Activated CD8-positive, alpha-beta T cell treated with anti-CD3 and anti-CD28 coated beads for 36 hours (primary cell): ENCODE measurements at regions of chr14 and their contacts with region 1.

Region 1: GRCh38 chr14:36520601-36521525 is 831 bp upstream of the NKX2-1 start:
- DNase-seq: no peak
- ATAC-seq: no peak
- H3K4me3 Mint-ChIP-seq: peak overlapping the region; percentile 17
- H3K27ac Mint-ChIP-seq: no peak overlapping the region
- H3K4me1 Mint-ChIP-seq: peaks cover 14% of the 10 kb centered on the region
- H3K27me3 Mint-ChIP-seq: peaks cover 63% of the 10 kb centered on the region
- CTCF ChIP-seq: no peak

Region 2: GRCh38 chr14:36478782-36479181 is 42.1 kb before region 1 on chr14:
- CTCF ChIA-PET with region 1: no interaction called
- POLR2A ChIA-PET with region 1: no interaction called
- intact Hi-C with region 1: no loop called
- DNase-seq: peak; percentile 20
- ATAC-seq: peak; percentile 74
- H3K4me3 Mint-ChIP-seq: no peak overlapping the region
- H3K27ac Mint-ChIP-seq: no peak overlapping the region
- H3K4me1 Mint-ChIP-seq: peaks cover 2% of the 10 kb centered on the region
- H3K27me3 Mint-ChIP-seq: peaks cover 12% of the 10 kb centered on the region
- CTCF ChIP-seq: no peak

Region 3: DNA sequence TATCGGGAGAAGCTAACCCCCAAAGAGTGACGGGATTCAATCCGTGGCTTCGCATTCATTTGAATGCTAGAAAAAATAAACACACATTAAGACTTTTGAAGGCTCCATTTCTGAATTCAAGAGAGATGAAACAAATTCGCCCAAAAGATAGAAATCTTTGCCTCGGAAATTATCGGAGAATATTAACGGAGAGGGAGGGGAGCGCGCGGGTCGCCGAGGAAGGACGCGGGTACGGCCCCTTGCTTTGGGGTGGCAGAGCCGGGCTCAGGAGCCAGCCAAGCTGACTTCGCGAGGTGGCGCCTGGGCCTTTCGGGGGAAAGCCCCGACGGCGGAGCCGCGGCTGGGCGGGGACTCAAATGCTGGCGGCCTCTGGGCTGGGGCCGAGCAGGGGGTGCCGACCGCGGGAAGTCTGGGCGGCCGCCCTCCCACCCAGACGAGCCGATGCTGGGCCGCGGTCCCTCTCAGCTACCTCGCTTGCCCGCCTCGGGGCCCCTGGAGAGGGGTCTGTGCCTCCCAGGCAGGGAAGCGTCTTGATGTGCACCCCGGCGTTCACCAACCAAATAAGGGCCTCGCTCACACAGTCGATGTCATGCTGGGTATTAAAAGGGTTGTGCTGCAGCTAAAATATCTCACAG is 15.6 kb before region 1 on chr14:
- CTCF ChIA-PET with region 1: interaction called, 15 read pairs
- POLR2A ChIA-PET with region 1: interaction called, 4 read pairs
- intact Hi-C with region 1: no loop called
- DNase-seq: no peak
- ATAC-seq: peak; percentile 42
- H3K4me3 Mint-ChIP-seq: no peak overlapping the region
- H3K27ac Mint-ChIP-seq: no peak overlapping the region
- H3K4me1 Mint-ChIP-seq: peaks cover 9% of the 10 kb centered on the region
- H3K27me3 Mint-ChIP-seq: peaks cover 72% of the 10 kb centered on the region
- CTCF ChIP-seq: no peak

Region 4: GRCh38 chr14:36580856-36581831 is 60.3 kb after region 1 on chr14:
- CTCF ChIA-PET with region 1: no interaction called
- POLR2A ChIA-PET with region 1: no interaction called
- intact Hi-C with region 1: loop called (anchors 5 kb)
- DNase-seq: peak; percentile 43
- ATAC-seq: no peak
- H3K4me3 Mint-ChIP-seq: no peak overlapping the region
- H3K27ac Mint-ChIP-seq: no peak overlapping the region
- H3K4me1 Mint-ChIP-seq: no peaks in the 10 kb centered on the region
- H3K27me3 Mint-ChIP-seq: peaks cover 59% of the 10 kb centered on the region
- CTCF ChIP-seq: no peak

Region 5: DNA sequence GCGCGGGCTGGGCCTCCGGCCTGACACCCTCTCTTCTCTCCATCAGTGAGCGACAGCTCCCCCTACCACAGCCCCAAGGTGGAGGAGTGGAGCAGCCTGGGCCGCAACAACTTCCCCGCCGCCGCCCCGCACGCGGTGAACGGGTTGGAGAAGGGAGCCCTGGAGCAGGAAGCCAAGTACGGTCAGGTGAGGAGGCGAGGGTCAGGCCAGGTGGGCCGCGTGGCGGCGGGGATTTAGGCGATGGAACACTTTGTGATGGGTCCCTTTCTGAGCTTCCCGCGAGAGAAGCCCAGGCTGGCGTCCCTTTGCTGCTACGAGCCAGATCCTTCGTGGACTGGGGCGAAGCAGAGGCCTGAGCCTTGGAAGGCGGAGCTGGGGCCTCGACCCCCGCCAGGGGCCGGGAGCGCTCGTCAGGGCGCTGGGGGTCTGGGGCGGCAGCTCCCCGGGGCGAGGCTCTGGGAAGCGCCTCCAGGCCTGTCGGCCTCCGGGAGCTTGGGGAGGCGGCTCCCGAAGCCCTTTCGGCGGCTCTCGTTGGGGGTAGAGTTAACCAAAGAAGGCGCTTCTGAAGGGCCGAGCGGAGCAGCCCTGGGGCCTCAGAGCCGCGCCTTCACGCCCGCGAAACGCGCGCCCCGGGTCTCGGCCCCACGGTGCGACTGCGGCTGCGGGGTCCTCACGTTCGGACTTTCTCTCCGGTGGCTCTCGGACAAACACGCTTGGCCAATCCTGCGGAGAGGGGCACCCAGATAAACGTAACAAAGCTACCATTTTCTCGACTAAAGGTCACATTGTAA is 145.7 kb after region 1 on chr14:
- CTCF ChIA-PET with region 1: no interaction called
- POLR2A ChIA-PET with region 1: no interaction called
- intact Hi-C with region 1: loop called (anchors 5 kb)
- DNase-seq: no peak
- ATAC-seq: no peak
- H3K4me3 Mint-ChIP-seq: no peak overlapping the region
- H3K27ac Mint-ChIP-seq: no peak overlapping the region
- H3K4me1 Mint-ChIP-seq: peaks cover 20% of the 10 kb centered on the region
- H3K27me3 Mint-ChIP-seq: peaks cover 55% of the 10 kb centered on the region
- CTCF ChIP-seq: no peak